ENCODE measurements at regions of chr1 and their contacts with region 1.

Region 1: GRCh38 chr1:11979851-11980675 is at the start of gene MFN2:
- DNase-seq: peak; percentile 95 to 99
- ATAC-seq: peak; percentile 82 to 86
- H3K4me3 ChIP-seq: peak within 1 kb of the TSS; percentile 75 to 93 (median 89)
- H3K27ac ChIP-seq: peak within 1 kb of the TSS; percentile 95 to 99 (median 98)
- H3K4me1 ChIP-seq: peaks cover 54 to 56% of the 10 kb centered on the region in 2 donors
- H3K27me3 ChIP-seq: no peaks in the 10 kb centered on the region
- CTCF ChIP-seq: no peak
- POLR2A ChIP-seq: peak; percentile 73 to 74
- total RNA-seq, gene MFN2: 176 to 282 (median 217) TPM

Region 2: DNA sequence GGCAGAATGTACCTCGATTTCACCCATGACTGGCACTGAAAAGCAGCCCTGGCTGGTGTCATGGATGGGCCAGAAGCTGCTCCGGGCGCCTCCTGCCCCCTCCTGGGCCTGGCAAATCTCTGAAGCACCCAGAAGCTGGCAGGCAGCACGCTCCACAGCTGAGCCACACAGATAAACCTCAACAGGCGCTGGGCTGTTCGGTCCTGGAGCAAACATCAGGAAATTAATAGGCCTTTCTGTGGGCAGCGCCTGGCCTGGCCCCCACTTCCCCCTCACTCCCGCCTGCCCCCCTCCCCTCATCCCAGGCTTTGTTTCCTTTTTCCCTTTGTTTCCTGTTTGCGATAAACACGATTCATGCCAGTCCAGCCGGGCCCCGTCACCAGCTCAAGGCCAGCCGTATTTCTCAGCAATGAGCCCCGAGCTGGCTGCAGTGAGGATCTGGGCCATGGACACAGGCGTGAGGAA is 521.2 kb before region 1 on chr1:
- in situ Hi-C with region 1: no loop called
- intact Hi-C with region 1: no loop called
- DNase-seq: no peak
- ATAC-seq: no peak
- H3K4me3 ChIP-seq: no peak overlapping the region
- H3K27ac ChIP-seq: no peak overlapping the region
- H3K4me1 ChIP-seq: no peaks in the 10 kb centered on the region
- H3K27me3 ChIP-seq: peaks cover 38 to 62% (median 45%) of the 10 kb centered on the region in 3 donors
- CTCF ChIP-seq: no peak
- POLR2A ChIP-seq: no peak

Region 3: GRCh38 chr1:11893907-11894251 is 86.2 kb before region 1 on chr1:
- in situ Hi-C with region 1: no loop called
- intact Hi-C with region 1: no loop called
- DNase-seq: peak in 1 of 2 donors; percentile 48
- ATAC-seq: peak; percentile 87 to 90
- H3K4me3 ChIP-seq: no peak overlapping the region
- H3K27ac ChIP-seq: no peak overlapping the region
- H3K4me1 ChIP-seq: no peaks in the 10 kb centered on the region
- H3K27me3 ChIP-seq: peaks cover 13 to 21% (median 20%) of the 10 kb centered on the region in 3 donors
- CTCF ChIP-seq: peak; percentile 88 to 94 (median 91)
- POLR2A ChIP-seq: no peak

Region 4: DNA sequence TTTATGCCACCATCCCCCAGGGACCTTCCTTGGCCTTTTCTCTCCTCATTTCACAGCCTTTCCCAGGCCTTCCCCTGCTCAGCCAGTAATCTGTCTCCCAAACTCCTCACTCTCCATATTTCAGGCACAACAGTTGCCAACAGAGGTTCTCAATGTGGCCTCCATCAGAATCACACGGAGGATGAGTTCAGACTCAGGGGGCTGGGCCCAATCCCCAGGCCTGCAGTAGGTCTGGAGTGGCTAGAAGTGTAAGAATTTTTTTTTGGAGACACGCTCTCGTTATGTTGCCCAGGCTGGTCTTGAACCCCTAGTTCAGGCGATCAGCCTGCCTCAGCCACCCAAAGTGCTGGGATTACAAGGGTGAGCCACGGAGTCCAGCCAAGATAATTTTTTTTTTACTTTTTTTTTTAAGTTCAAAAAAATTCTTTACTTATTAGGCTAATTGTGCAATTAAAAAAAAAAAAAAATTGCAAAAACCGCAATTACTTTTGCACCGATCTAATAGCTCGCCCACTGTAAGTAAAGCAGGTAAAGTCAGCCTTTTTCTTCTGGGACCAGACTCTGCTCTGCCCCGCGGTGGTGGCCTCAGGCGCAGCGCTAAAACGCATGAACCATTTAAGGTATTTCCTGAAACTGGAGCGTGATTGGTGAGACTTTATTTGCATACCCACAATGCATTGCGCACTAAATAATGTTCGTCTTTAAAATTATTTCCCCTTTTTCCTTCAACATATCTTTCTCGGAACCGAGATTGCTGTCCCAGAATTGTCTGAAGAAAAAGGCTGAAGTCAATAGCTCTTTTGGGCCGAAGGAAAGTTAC is 72.6 kb before region 1 on chr1:
- in situ Hi-C with region 1: no loop called
- intact Hi-C with region 1: loop called (anchors 1 kb)
- DNase-seq: peak; percentile 84 to 94
- ATAC-seq: peak; percentile 72 to 74
- H3K4me3 ChIP-seq: peak overlapping the region in 2 of 4 donors; percentile 86 to 93
- H3K27ac ChIP-seq: peak overlapping the region; percentile 95 to 99 (median 98)
- H3K4me1 ChIP-seq: no peaks in the 10 kb centered on the region
- H3K27me3 ChIP-seq: no peaks in the 10 kb centered on the region
- CTCF ChIP-seq: peak; percentile 78 to 93 (median 87)
- POLR2A ChIP-seq: no peak

Region 5: GRCh38 chr1:11929849-11930248 is 50.2 kb before region 1 on chr1:
- in situ Hi-C with region 1: loop called in 1 of 4 experiments (anchors 10 kb)
- intact Hi-C with region 1: loop called (anchors 5 kb)
- DNase-seq: peak; percentile 77 to 86
- ATAC-seq: peak; percentile 43 to 53
- H3K4me3 ChIP-seq: no peak overlapping the region
- H3K27ac ChIP-seq: peak overlapping the region; percentile 73 to 79 (median 76)
- H3K4me1 ChIP-seq: peaks cover 35 to 37% of the 10 kb centered on the region in 2 donors
- H3K27me3 ChIP-seq: no peaks in the 10 kb centered on the region
- CTCF ChIP-seq: no peak
- POLR2A ChIP-seq: peak in 1 of 2 donors; percentile 15

Region 6: DNA sequence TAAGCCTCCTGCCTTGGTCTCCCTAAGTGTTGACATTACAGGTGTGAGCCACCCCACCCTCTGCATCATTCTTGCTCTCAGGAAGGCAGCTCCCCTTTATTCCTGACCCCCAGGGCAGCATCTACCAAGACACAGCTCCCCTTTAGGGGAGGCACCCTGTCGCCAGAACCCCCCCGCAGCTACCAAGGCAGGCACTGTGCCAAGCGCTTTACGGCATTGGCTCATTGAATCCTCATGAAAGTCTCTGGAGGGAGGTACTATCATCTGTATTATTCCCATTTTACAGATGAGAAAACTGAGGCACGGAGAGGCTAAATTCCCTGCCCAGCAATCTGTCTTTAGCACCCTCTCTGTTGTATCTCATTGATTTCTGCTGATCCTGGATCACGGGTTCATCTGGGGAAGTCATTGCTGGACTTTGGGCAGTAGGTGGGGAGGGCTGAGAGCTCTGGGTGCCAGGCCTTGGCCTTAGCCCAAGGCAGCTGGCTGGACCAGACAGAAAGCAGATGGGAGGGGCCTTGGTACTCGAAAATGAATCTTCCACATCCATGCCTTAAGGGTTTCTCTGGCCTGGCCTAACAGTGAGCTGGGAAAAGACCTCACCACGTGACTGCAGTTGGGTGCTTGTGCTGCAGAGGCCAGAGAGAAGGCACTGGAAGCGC is 39.7 kb before region 1 on chr1:
- in situ Hi-C with region 1: no loop called
- intact Hi-C with region 1: loop called (anchors 5 kb)
- DNase-seq: peak in 1 of 2 donors; percentile 45
- ATAC-seq: peak; percentile 11 to 14
- H3K4me3 ChIP-seq: no peak overlapping the region
- H3K27ac ChIP-seq: peak overlapping the region; percentile 79 to 90 (median 86)
- H3K4me1 ChIP-seq: peaks cover 65 to 70% of the 10 kb centered on the region in 2 donors
- H3K27me3 ChIP-seq: no peaks in the 10 kb centered on the region
- CTCF ChIP-seq: no peak
- POLR2A ChIP-seq: no peak

Region 7: GRCh38 chr1:12019858-12020509 is 39.9 kb after region 1 on chr1:
- in situ Hi-C with region 1: no loop called
- intact Hi-C with region 1: loop called (anchors 1 kb)
- DNase-seq: no peak
- ATAC-seq: peak in 1 of 2 donors; percentile 3
- H3K4me3 ChIP-seq: peak overlapping the region; percentile 67 to 93 (median 84)
- H3K27ac ChIP-seq: peak overlapping the region; percentile 83 to 90 (median 84)
- H3K4me1 ChIP-seq: peaks cover 6 to 8% of the 10 kb centered on the region in 2 donors
- H3K27me3 ChIP-seq: no peaks in the 10 kb centered on the region
- CTCF ChIP-seq: no peak
- POLR2A ChIP-seq: no peak

Region 8: GRCh38 chr1:12142891-12143630 is 163.0 kb after region 1 on chr1:
- in situ Hi-C with region 1: no loop called
- intact Hi-C with region 1: no loop called
- DNase-seq: peak in 1 of 2 donors; percentile 37
- ATAC-seq: peak; percentile 6
- H3K4me3 ChIP-seq: no peak overlapping the region
- H3K27ac ChIP-seq: peak overlapping the region; percentile 40 to 66 (median 66)
- H3K4me1 ChIP-seq: peaks cover 8 to 13% of the 10 kb centered on the region in 2 donors
- H3K27me3 ChIP-seq: no peaks in the 10 kb centered on the region
- CTCF ChIP-seq: no peak
- POLR2A ChIP-seq: no peak